K562 (cell line): ENCODE measurements at regions of chr11 and their contacts with region 1.

Region 1: GRCh38 chr11:46445920-46446771 is 54.6 kb upstream of the CHRM4 start:
- DNase-seq: no peak
- ATAC-seq: no peak; the same call in 1 of the 3 replicates
- H3K4me3 ChIP-seq: no peak overlapping the region
- H3K27ac ChIP-seq: no peak overlapping the region
- H3K4me1 ChIP-seq: peaks cover 5 to 8% of the 10 kb centered on the region in 2 experiments; a peak in 2 of 5 replicates
- H3K27me3 ChIP-seq: no peaks in the 10 kb centered on the region
- CTCF ChIP-seq: no peak; a peak in 1 of 6 replicates
- EP300 ChIP-seq: no peak
- POLR2A ChIP-seq: no peak
- RAD21 ChIP-seq: no peak

Region 2: DNA sequence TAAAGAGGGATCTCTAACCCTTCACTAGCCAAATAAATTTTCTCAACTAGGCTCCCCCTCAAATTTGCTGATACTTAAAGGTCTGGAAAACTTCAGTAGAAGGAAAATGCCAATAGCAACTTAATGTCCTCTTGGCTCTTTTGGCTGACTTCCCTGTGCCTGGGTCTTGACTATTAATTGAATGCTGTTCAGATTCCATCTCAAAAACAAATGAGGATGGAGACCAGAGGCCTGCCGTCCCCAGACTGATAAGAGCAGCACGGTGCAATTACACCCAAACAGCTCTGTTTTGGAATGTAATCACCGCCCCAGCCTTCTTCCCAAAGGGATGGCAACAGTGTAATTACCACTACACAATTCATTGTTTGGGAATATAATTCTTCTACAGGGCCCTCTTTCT is 34.8 kb after region 1 on chr11:
- CTCF ChIA-PET with region 1: no interaction called
- POLR2A ChIA-PET with region 1: interaction called, 10 read pairs
- in situ Hi-C with region 1: no loop called
- intact Hi-C with region 1: no loop called
- DNase-seq: no peak
- ATAC-seq: peak; percentile 42; the same call in 2 of the 3 replicates
- H3K4me3 ChIP-seq: no peak overlapping the region
- H3K27ac ChIP-seq: no peak overlapping the region
- H3K4me1 ChIP-seq: no peaks in the 10 kb centered on the region; a peak in 1 of 5 replicates
- H3K27me3 ChIP-seq: no peaks in the 10 kb centered on the region
- CTCF ChIP-seq: no peak
- EP300 ChIP-seq: no peak
- POLR2A ChIP-seq: no peak
- RAD21 ChIP-seq: no peak

Region 3: GRCh38 chr11:46554205-46555055 is 108.3 kb after region 1 on chr11:
- CTCF ChIA-PET with region 1: no interaction called
- POLR2A ChIA-PET with region 1: no interaction called
- in situ Hi-C with region 1: no loop called
- intact Hi-C with region 1: no loop called
- DNase-seq: no peak
- ATAC-seq: peak; percentile 25
- H3K4me3 ChIP-seq: no peak overlapping the region
- H3K27ac ChIP-seq: peak overlapping the region; percentile 42; the same call in 2 of the 3 replicates
- H3K4me1 ChIP-seq: peaks cover 25 to 48% of the 10 kb centered on the region in 2 experiments
- H3K27me3 ChIP-seq: no peaks in the 10 kb centered on the region
- CTCF ChIP-seq: no peak
- EP300 ChIP-seq: 0 out of 2 replicates have a peak, but pooled peaks have one; percentile 50
- POLR2A ChIP-seq: no peak
- RAD21 ChIP-seq: no peak